H1 (cell line): ENCODE measurements at regions of chr6 and their contacts with region 1.

Region 1: GRCh38 chr6:114398481-114398880 is 55.7 kb upstream of the HS3ST5 start:
- DNase-seq: no peak
- H3K4me3 ChIP-seq: no peak overlapping the region
- H3K27ac ChIP-seq: no peak overlapping the region
- H3K4me1 ChIP-seq: 0 out of 7 replicates have a peak, but pooled peaks cover 0 to 2% (median 0%) of the 10 kb centered on the region in 4 experiments
- H3K27me3 ChIP-seq: no peaks in the 10 kb centered on the region
- CTCF ChIP-seq: no peak
- EP300 ChIP-seq: no peak
- POLR2A ChIP-seq: no peak
- RAD21 ChIP-seq: no peak

Region 2: DNA sequence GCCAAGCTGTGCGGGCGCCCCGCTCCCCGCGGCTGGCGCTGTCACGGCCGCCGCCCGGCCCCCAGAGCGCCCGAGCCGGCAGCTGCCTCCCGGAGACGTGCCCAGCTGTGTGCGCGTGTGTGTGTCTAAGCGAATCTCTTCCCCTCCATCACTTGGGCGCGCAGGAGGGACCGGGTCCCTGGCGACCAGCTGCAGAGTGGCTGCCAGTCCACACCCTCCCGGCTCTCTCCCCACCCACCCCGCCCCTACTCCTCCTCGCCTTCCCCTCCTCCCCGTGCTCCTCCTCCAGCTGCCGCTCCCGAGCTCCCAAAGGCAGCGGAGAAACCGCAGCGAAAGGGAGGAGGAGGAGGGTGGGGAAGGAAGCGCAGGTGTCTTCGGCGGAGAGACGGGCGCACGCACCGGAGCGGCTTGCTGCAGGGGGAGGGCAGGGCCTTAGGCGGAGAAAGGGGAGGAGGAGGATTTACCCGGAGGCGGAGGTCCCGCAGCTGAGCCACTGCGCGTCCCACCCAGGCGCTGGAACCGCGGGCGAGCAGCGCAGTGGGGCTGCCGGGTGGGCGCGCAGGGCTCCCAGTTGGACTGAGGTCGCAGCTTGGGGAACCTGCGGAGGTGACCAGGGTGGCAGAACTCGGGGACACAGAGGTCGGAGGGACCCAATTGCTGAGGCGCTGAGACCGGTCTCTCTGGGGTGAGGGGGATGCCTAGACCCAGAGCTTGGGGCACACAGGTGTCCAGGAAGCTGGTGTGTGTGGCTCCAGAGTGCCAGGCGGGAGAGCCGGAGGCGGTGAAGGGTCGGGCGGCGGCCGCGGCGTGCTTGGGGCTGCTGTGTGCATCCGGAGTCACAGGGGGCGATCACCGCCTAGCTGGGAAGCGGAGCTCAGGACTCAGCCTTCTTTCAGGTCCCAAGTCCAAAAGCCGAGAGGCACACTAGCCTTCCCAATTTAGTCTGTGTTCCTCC is 55.4 kb before region 1 on chr6 and contains the start of gene HS3ST5:
- CTCF ChIA-PET with region 1: interaction called, 3 read pairs
- POLR2A ChIA-PET with region 1: interaction called, 50 read pairs
- DNase-seq: peak in 1 of 2 experiments; percentile 89
- H3K4me3 ChIP-seq: peak within 1 kb of the TSS; percentile 80 to 98 (median 82)
- H3K27ac ChIP-seq: peak within 1 kb of the TSS; percentile 56
- H3K4me1 ChIP-seq: peaks cover 0 to 15% (median 7%) of the 10 kb centered on the region in 4 experiments; a peak in 4 of 7 replicates
- H3K27me3 ChIP-seq: no peaks in the 10 kb centered on the region
- CTCF ChIP-seq: peak; percentile 76 to 84 (median 83)
- EP300 ChIP-seq: 0 out of 3 replicates have a peak, but pooled peaks of 1 of the 2 experiments have one; percentile 32
- POLR2A ChIP-seq: 0 out of 3 replicates have a peak, but pooled peaks of 1 of the 2 experiments have one; percentile 67
- RAD21 ChIP-seq: peak; percentile 88 to 90
- total RNA-seq, gene HS3ST5: 9.9 and 11.2 TPM in 2 replicates

Region 3: DNA sequence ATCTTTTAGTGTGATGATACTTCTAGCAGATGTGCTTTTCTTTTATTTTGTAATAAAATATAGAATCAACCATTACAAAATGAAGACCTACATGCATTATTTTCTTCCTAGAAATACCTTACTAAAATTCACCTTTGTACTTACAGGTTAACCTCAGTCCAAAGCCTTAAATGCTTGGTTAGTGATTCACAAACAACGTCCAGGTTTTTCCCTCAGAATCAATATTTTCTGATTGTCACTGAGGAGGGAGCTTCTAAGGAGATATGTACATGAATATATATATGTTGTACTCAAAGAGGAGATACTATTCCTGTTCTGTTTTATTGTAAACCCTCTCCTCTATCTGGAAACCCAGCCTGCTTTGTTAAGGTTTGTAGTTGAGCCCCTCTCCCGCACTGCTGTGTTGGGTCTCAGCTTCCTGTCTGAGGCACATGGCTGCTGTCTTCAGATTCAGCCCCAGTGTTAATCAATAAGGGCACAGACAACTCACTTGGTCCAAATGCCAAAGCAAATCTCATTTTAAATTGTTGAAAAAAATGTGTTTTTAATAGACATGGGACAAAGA is 21.8 kb before region 1 on chr6:
- CTCF ChIA-PET with region 1: no interaction called
- POLR2A ChIA-PET with region 1: no interaction called
- DNase-seq: no peak
- H3K4me3 ChIP-seq: no peak overlapping the region
- H3K27ac ChIP-seq: no peak overlapping the region
- H3K4me1 ChIP-seq: peaks cover 0 to 9% (median 4%) of the 10 kb centered on the region in 4 experiments; a peak in 2 of 7 replicates
- H3K27me3 ChIP-seq: no peaks in the 10 kb centered on the region
- CTCF ChIP-seq: no peak
- EP300 ChIP-seq: no peak
- POLR2A ChIP-seq: no peak
- RAD21 ChIP-seq: no peak